ENCODE measurements at regions of chr14 and their contacts with region 1.

Region 1: DNA sequence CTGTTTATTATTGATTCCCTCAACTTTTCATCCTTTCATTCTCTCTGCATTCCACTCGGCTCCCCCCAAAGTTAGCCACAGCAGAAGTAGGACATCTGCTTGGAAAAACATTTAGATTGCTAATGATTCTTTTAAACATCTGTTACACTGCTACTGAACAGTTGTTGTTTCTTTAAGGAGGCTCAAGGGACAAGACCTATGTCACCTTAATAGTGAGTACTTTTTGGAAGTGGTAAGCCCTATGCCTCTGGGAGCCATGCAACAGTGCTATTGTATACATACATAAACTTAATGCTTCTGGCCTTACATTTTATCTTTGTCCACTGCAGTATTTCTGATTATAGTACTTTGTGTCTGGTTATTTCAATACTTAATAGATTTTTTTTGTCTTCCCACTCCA is 628.2 kb upstream of the FOXG1 start:
- DNase-seq: no peak

Region 2: GRCh38 chr14:28097585-28097984 is 40.8 kb before region 1 on chr14:
- intact Hi-C with region 1: loop called in 1 of 2 experiments (anchors 2 kb)
- DNase-seq: no peak

Region 3: GRCh38 chr14:28116716-28117115 is 21.6 kb before region 1 on chr14:
- intact Hi-C with region 1: no loop called
- DNase-seq: no peak

Measured in posterior vena cava (tissue), 2 donors.